MCF 10A (cell line): ENCODE measurements at regions of chr10 and their contacts with region 1.

Region 1: DNA sequence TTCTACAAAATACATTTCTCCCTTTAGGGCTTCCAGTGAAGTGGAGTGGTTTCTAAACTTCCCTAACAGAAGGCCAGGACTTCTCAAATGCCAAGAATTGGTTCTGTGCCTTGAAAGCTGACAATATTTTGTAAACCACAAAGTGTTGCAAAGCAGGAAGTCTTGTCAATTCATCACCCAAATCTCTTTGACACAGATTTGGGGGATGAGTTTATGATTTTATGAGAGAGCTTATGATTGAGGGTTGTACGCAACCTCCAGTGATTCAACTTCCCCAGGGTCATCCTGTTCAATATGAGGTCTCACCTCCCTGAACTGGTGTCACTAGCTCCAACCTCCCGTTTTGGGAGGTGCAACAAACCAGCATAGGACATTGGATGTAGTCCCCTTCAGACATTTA is 83.7 kb downstream of the PRLHR start:
- DNase-seq: peak; percentile 48
- H3K4me3 Mint-ChIP-seq: no peak overlapping the region
- H3K27ac Mint-ChIP-seq: no peak overlapping the region
- H3K4me1 Mint-ChIP-seq: peaks cover 23% of the 10 kb centered on the region
- H3K27me3 Mint-ChIP-seq: no peaks in the 10 kb centered on the region
- CTCF ChIP-seq: no peak

Region 2: DNA sequence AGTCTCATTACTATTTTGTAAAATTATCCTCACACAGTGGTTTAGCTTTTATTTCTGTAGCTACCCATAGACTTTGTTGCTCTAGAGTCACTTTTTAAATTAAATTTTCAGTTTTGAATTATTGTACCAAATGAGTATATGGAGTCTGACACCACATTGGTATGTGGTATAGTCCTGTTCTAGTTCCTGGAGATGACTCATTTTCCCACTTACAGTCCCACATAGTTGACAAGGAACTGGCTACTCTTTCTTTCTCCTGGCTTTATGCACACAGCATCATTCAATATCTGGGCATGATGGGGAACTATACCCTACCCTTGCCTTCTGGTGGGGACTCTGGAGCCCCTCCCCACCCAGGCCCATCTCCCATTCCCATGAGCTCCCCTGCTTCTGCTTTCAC is 372.4 kb before region 1 on chr10:
- CTCF ChIA-PET with region 1: no interaction called
- POLR2A ChIA-PET with region 1: no interaction called
- intact Hi-C with region 1: no loop called
- DNase-seq: no peak
- H3K4me3 Mint-ChIP-seq: no peak overlapping the region
- H3K27ac Mint-ChIP-seq: no peak overlapping the region
- H3K4me1 Mint-ChIP-seq: no peaks in the 10 kb centered on the region
- H3K27me3 Mint-ChIP-seq: no peaks in the 10 kb centered on the region
- CTCF ChIP-seq: no peak

Region 3: DNA sequence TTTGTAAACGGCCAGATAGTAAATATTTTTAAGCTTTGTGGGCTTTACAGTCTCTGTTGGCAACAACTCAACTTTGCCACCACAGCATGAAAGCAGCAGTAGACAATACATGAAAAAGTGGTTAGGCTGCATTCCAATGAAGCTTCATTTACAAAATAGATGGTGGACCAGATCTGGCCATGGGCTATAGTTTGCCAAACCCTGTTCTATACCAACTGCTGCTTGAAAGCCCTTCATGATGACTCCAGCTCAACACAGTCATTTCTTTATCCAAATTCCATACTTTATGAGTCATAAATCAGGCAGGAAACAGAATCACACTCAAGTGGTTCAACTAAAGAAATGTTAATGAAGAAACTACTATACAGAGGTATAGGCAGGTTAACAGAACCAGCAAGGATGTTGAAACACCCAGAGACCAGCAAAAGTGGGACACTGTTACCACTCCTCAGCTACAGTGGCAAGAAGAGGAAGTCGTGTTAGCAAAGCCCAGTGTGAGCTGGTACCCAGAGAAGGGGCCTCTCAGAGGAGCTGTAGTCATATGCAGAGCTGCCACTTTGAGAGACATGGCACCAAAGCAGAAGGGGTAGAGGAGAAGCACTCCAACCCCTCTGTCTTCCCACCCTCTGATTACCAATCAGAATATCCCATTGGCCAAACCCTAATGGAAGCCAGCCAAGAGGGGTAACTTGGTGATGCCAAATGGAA is 11.2 kb after region 1 on chr10:
- CTCF ChIA-PET with region 1: interaction called, 3 read pairs
- POLR2A ChIA-PET with region 1: interaction called, 12 read pairs
- intact Hi-C with region 1: no loop called
- DNase-seq: peak; percentile 88
- H3K4me3 Mint-ChIP-seq: no peak overlapping the region
- H3K27ac Mint-ChIP-seq: peak overlapping the region; percentile 43
- H3K4me1 Mint-ChIP-seq: peaks cover 27% of the 10 kb centered on the region
- H3K27me3 Mint-ChIP-seq: no peaks in the 10 kb centered on the region
- CTCF ChIP-seq: no peak